Heart right ventricle (tissue), 16 donors: ENCODE measurements at regions of chr1 and their contacts with region 1.

Region 1: GRCh38 chr1:9494929-9495758 is 44.1 kb upstream of the SLC25A33 start:
- DNase-seq: peak; percentile 19 to 63
- ATAC-seq: peak; percentile 67 to 81 (median 72)
- H3K4me3 ChIP-seq: peak overlapping the region in 7 of 10 donors; percentile 31 to 52 (median 43)
- H3K27ac ChIP-seq: no peak overlapping the region
- H3K4me1 ChIP-seq: peaks cover 0 to 15% (median 8%) of the 10 kb centered on the region in 9 donors
- H3K27me3 ChIP-seq: peaks cover 0 to 12% (median 0%) of the 10 kb centered on the region in 7 donors
- CTCF ChIP-seq: peak; percentile 95 to 99 (median 98)

Region 2: GRCh38 chr1:9110669-9111356 is 384.3 kb before region 1 on chr1:
- intact Hi-C with region 1: loop called in 1 of 10 experiments (anchors 10 kb)
- DNase-seq: peak; percentile 87 to 89
- ATAC-seq: peak; percentile 46 to 84 (median 76)
- H3K4me3 ChIP-seq: no peak overlapping the region
- H3K27ac ChIP-seq: peak overlapping the region in 1 of 10 donors; percentile 5
- H3K4me1 ChIP-seq: peaks cover 0 to 29% (median 7%) of the 10 kb centered on the region in 9 donors
- H3K27me3 ChIP-seq: no peaks in the 10 kb centered on the region
- CTCF ChIP-seq: peak; percentile 88 to 98 (median 90)

Region 3: GRCh38 chr1:9234223-9235095 is 260.7 kb before region 1 on chr1 and contains the start of gene H6PD:
- intact Hi-C with region 1: loop called in 1 of 10 experiments (anchors 1 kb)
- DNase-seq: peak; percentile 86 to 91
- ATAC-seq: peak; percentile 71 to 89 (median 82)
- H3K4me3 ChIP-seq: peak within 1 kb of the TSS; percentile 40 to 78 (median 66)
- H3K27ac ChIP-seq: peak within 1 kb of the TSS; percentile 91 to 99 (median 95)
- H3K4me1 ChIP-seq: peaks cover 2 to 65% (median 54%) of the 10 kb centered on the region in 9 donors
- H3K27me3 ChIP-seq: no peaks in the 10 kb centered on the region
- CTCF ChIP-seq: peak; percentile 68 to 84 (median 71)
- total RNA-seq, gene H6PD: 22.3 to 45.0 (median 29.3) TPM

Region 4: GRCh38 chr1:9269078-9269501 is 226.1 kb before region 1 on chr1:
- intact Hi-C with region 1: loop called in 6 of 10 experiments (anchors 1 to 5 kb)
- DNase-seq: no peak
- ATAC-seq: peak in 2 of 8 donors; percentile 7 to 18
- H3K4me3 ChIP-seq: no peak overlapping the region
- H3K27ac ChIP-seq: no peak overlapping the region
- H3K4me1 ChIP-seq: peaks cover 0 to 29% (median 15%) of the 10 kb centered on the region in 9 donors
- H3K27me3 ChIP-seq: no peaks in the 10 kb centered on the region
- CTCF ChIP-seq: no peak

Region 5: GRCh38 chr1:9561429-9561828 is 66.3 kb after region 1 on chr1:
- intact Hi-C with region 1: loop called in 1 of 10 experiments (anchors 2 kb)
- DNase-seq: peak in 1 of 2 donors; percentile 66
- ATAC-seq: peak; percentile 45 to 93 (median 92)
- H3K4me3 ChIP-seq: peak overlapping the region in 1 of 10 donors; percentile 25
- H3K27ac ChIP-seq: peak overlapping the region in 6 of 10 donors; percentile 33 to 68 (median 58)
- H3K4me1 ChIP-seq: peaks cover 4 to 49% (median 41%) of the 10 kb centered on the region in 9 donors
- H3K27me3 ChIP-seq: no peaks in the 10 kb centered on the region
- CTCF ChIP-seq: no peak

Region 6: DNA sequence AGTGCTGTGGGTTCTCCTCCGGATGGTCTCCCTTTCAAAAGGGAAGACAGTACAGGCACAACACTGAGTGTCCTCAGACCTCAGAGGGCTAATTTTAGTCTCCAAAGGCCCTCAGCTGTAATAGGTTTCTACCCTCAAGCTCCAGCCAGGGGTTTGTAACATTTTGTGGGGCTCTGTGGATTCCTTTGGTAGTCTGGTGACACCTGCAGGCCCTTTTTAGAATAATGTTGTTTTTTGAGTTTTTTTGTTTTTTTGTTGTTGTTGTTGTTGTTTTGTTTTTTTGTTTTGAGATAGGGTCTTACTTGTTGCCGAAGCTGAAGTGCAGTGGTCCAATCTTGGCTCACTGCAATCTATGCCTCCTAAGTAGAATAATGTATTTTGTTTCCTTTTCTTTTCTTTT is 78.6 kb after region 1 on chr1:
- intact Hi-C with region 1: loop called (anchors 1 to 5 kb)
- DNase-seq: no peak
- ATAC-seq: peak in 7 of 8 donors; percentile 49 to 72 (median 62)
- H3K4me3 ChIP-seq: no peak overlapping the region
- H3K27ac ChIP-seq: no peak overlapping the region
- H3K4me1 ChIP-seq: peaks cover 0 to 12% (median 0%) of the 10 kb centered on the region in 9 donors
- H3K27me3 ChIP-seq: no peaks in the 10 kb centered on the region
- CTCF ChIP-seq: peak; percentile 10 to 62 (median 46)